ENCODE measurements at regions of chr9 and their contacts with region 1.

Region 1: GRCh38 chr9:97890038-97890437 is 32.3 kb downstream of the TRMO start:
- DNase-seq: peak in 1 of 2 experiments; percentile 91
- H3K4me3 ChIP-seq: no peak overlapping the region
- H3K27ac ChIP-seq: no peak overlapping the region
- H3K4me1 ChIP-seq: peaks cover 0 to 7% (median 0%) of the 10 kb centered on the region in 4 experiments; a peak in 2 of 7 replicates
- H3K27me3 ChIP-seq: peaks cover 0 to 3% (median under 1%) of the 10 kb centered on the region in 4 experiments; a peak in 3 of 7 replicates
- CTCF ChIP-seq: peak; percentile 69 to 84 (median 80)
- EP300 ChIP-seq: no peak
- POLR2A ChIP-seq: no peak
- RAD21 ChIP-seq: peak; percentile 42 to 55

Region 2: DNA sequence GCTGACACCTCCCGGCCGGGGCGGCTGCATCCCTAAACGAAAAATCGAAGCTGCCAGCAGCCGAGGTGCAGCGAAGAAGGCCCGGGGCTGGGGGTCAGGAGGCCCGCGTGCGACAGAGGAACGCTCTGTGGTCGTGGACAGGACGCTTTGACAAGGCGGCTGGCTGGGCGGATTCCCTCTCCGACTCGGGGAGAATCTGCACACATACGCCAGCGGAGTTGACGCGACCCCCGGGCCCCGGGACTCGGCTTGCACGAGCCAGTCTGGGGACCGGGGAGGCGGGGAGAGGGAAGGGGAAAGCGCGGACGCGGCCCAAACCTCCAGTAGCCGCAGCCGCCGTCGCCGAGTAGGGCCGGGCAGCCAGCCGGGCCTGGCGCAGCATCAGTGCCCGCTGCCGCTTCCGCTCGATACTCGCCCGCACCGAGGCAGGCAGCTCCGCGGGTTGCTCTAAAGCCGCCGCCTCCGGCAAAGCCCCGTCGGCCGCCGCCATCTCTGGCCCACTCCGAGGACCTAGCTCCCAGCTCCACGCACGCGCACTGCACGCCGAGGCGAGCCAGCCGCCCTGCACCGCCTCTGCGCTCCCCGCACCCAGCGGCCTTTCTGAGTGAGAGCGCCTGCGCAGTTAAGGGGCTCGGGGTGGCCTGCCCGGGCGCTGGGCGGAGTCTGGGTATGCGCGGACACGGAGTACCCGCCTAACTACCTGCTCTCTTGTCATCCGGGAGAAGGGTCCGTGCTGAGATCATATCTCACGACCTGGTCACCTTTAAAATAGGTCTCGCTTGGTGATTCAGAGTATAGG is 193.0 kb before region 1 on chr9 and contains the start of gene XPA:
- CTCF ChIA-PET with region 1: interaction called, 10 read pairs
- POLR2A ChIA-PET with region 1: no interaction called
- DNase-seq: peak; percentile 70 to 96
- H3K4me3 ChIP-seq: peak within 1 kb of the TSS; percentile 64 to 80 (median 74)
- H3K27ac ChIP-seq: no peak within 1 kb of the TSS; the same call in 1 of the 2 replicates
- H3K4me1 ChIP-seq: peaks cover 0 to 4% (median 1%) of the 10 kb centered on the region in 4 experiments; a peak in 2 of 7 replicates
- H3K27me3 ChIP-seq: peaks cover 0 to 15% (median 11%) of the 10 kb centered on the region in 4 experiments; a peak in 6 of 7 replicates
- CTCF ChIP-seq: no peak
- EP300 ChIP-seq: no peak
- POLR2A ChIP-seq: peak; percentile 60 to 89
- RAD21 ChIP-seq: no peak
- total RNA-seq, gene XPA: 2.6 and 3.1 TPM in 2 replicates

Region 3: GRCh38 chr9:97848582-97849237 is 41.3 kb before region 1 on chr9:
- CTCF ChIA-PET with region 1: interaction called, 27 read pairs
- POLR2A ChIA-PET with region 1: no interaction called
- DNase-seq: no peak
- H3K4me3 ChIP-seq: peak overlapping the region in 3 of 4 experiments; percentile 33 to 59 (median 34); a peak in 6 of 8 replicates
- H3K27ac ChIP-seq: no peak overlapping the region
- H3K4me1 ChIP-seq: peaks cover 5 to 24% (median 14%) of the 10 kb centered on the region in 4 experiments
- H3K27me3 ChIP-seq: peaks cover 78 to 86% (median 83%) of the 10 kb centered on the region in 4 experiments
- CTCF ChIP-seq: no peak
- EP300 ChIP-seq: no peak
- POLR2A ChIP-seq: no peak
- RAD21 ChIP-seq: no peak

Region 4: GRCh38 chr9:97863314-97863713 is 26.7 kb before region 1 on chr9:
- CTCF ChIA-PET with region 1: interaction called, 26 read pairs
- POLR2A ChIA-PET with region 1: no interaction called
- DNase-seq: no peak
- H3K4me3 ChIP-seq: no peak overlapping the region
- H3K27ac ChIP-seq: no peak overlapping the region
- H3K4me1 ChIP-seq: peaks cover 0 to 5% (median under 1%) of the 10 kb centered on the region in 4 experiments; a peak in 5 of 7 replicates
- H3K27me3 ChIP-seq: peaks cover 26 to 44% (median 41%) of the 10 kb centered on the region in 4 experiments
- CTCF ChIP-seq: no peak
- EP300 ChIP-seq: no peak
- POLR2A ChIP-seq: no peak
- RAD21 ChIP-seq: no peak

Region 5: DNA sequence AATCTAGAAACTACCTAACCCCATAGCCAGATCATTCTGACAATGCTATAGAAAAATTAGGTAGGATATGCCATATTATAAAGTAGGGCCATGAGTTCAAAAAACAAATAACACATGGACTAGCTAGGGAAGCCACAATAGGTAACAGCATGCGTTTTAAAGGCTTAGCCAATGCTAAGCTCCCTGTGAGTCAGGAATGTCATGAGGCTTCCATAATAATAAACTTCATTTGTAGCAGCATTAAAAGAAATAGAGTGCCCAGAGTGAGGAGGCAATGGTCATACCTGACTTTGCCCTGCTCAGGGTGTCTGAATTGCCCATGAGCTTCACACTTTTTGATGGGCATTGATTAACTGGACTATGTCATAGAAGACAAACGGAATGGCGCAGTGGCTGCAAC is 21.2 kb before region 1 on chr9:
- CTCF ChIA-PET with region 1: interaction called, 26 read pairs
- POLR2A ChIA-PET with region 1: no interaction called
- DNase-seq: peak in 1 of 2 experiments; percentile 42
- H3K4me3 ChIP-seq: peak overlapping the region in 1 of 4 experiments; percentile 19; a peak in 1 of 8 replicates
- H3K27ac ChIP-seq: no peak overlapping the region
- H3K4me1 ChIP-seq: peaks cover under 1 to 8% (median 6%) of the 10 kb centered on the region in 4 experiments; a peak in 4 of 7 replicates
- H3K27me3 ChIP-seq: no peaks in the 10 kb centered on the region; a peak in 1 of 7 replicates
- CTCF ChIP-seq: no peak
- EP300 ChIP-seq: no peak
- POLR2A ChIP-seq: no peak
- RAD21 ChIP-seq: no peak

Region 6: DNA sequence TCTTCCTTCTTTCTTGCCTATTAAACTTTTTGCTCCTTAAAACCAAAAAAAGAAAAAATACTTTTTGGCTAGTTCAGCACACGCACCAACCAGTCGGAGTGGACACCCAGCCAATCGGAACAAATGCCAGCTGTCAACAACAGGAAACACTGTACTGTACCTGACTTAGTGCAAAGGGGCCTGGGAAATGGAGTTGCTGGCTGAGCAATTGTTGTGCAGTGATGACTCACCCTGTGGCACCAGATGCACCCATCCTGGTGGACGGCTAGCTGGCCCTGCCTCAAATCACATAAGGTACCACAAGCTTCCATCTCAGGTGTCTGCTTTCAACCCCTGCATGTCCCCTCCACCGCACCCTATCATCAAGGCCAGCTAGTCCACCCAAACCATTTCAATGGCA is 16.2 kb before region 1 on chr9:
- CTCF ChIA-PET with region 1: interaction called, 29 read pairs
- POLR2A ChIA-PET with region 1: no interaction called
- DNase-seq: peak in 1 of 2 experiments; percentile 35
- H3K4me3 ChIP-seq: no peak overlapping the region
- H3K27ac ChIP-seq: no peak overlapping the region
- H3K4me1 ChIP-seq: peaks cover 1 to 9% (median 5%) of the 10 kb centered on the region in 4 experiments; a peak in 4 of 7 replicates
- H3K27me3 ChIP-seq: no peaks in the 10 kb centered on the region; a peak in 2 of 7 replicates
- CTCF ChIP-seq: no peak
- EP300 ChIP-seq: no peak
- POLR2A ChIP-seq: no peak
- RAD21 ChIP-seq: no peak

Region 7: DNA sequence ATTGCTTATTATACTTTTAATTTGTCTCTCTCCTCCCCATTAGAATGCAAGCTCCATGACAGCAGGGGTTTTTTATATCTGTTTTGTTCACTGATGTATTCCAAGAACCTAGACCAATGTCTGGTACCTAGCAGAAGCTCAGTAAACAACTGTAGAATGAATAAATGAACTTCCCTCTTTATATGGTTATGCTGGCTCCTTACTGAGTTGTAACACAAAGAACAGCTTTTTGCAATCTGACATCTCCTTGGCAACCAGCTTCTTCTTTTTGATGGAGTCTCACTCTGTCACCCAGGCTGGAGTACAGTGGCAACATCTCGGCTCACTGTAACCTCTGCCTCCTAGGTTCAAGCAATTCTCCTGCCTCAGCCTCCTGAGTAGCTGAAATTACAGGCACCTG is 18.7 kb after region 1 on chr9:
- CTCF ChIA-PET with region 1: interaction called, 110 read pairs
- POLR2A ChIA-PET with region 1: interaction called, 3 read pairs
- DNase-seq: no peak
- H3K4me3 ChIP-seq: no peak overlapping the region
- H3K27ac ChIP-seq: no peak overlapping the region
- H3K4me1 ChIP-seq: no peaks in the 10 kb centered on the region
- H3K27me3 ChIP-seq: no peaks in the 10 kb centered on the region
- CTCF ChIP-seq: no peak
- EP300 ChIP-seq: no peak
- POLR2A ChIP-seq: no peak
- RAD21 ChIP-seq: no peak

Region 8: DNA sequence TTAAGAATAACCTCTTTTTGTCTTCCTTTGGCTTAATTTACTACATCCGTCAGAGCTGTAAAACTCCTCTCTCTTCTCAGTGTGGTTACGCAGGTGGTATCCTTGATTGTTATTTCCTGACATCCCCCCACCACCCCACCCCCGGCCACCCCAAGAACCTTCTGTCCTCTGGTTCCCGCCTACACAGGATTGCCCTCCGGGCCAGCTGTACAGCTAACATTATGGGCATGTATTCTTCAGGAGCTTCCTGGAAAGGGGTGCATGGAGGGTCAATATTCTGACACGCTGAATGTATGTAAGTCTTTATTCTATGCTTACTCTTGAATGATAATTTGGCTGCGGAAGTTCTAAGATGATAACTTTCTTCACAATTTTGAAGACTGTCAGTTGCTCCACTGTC is 80.1 kb after region 1 on chr9:
- CTCF ChIA-PET with region 1: no interaction called
- POLR2A ChIA-PET with region 1: no interaction called
- DNase-seq: no peak
- H3K4me3 ChIP-seq: no peak overlapping the region
- H3K27ac ChIP-seq: no peak overlapping the region
- H3K4me1 ChIP-seq: no peaks in the 10 kb centered on the region
- H3K27me3 ChIP-seq: peaks cover 0 to 21% (median 9%) of the 10 kb centered on the region in 4 experiments; a peak in 4 of 7 replicates
- CTCF ChIP-seq: no peak
- EP300 ChIP-seq: no peak
- POLR2A ChIP-seq: no peak
- RAD21 ChIP-seq: no peak